Vagina (tissue), 2 donors: ENCODE measurements at regions of chr11 and their contacts with region 1.

Region 1: GRCh38 chr11:6443269-6444003 is 2.6 kb upstream of the HPX start:
- DNase-seq: no peak
- H3K4me3 ChIP-seq: no peak overlapping the region
- H3K27ac ChIP-seq: no peak overlapping the region
- H3K4me1 ChIP-seq: no peaks in the 10 kb centered on the region
- H3K27me3 ChIP-seq: no peaks in the 10 kb centered on the region
- CTCF ChIP-seq: peak; percentile 64 to 78 (median 71)
- POLR2A ChIP-seq: no peak

Region 2: GRCh38 chr11:6389921-6390724 is 53.3 kb before region 1 on chr11 and contains the start of gene SMPD1:
- intact Hi-C with region 1: loop called (anchors 10 kb)
- DNase-seq: peak; percentile 94 to 98
- H3K4me3 ChIP-seq: peak within 1 kb of the TSS; percentile 76 to 91
- H3K27ac ChIP-seq: peak within 1 kb of the TSS; percentile 90
- H3K4me1 ChIP-seq: peaks cover 31% of the 10 kb centered on the region
- H3K27me3 ChIP-seq: no peaks in the 10 kb centered on the region
- CTCF ChIP-seq: no peak
- POLR2A ChIP-seq: peak in 1 of 2 donors; percentile 67
- total RNA-seq, gene SMPD1: 23.1 TPM

Region 3: DNA sequence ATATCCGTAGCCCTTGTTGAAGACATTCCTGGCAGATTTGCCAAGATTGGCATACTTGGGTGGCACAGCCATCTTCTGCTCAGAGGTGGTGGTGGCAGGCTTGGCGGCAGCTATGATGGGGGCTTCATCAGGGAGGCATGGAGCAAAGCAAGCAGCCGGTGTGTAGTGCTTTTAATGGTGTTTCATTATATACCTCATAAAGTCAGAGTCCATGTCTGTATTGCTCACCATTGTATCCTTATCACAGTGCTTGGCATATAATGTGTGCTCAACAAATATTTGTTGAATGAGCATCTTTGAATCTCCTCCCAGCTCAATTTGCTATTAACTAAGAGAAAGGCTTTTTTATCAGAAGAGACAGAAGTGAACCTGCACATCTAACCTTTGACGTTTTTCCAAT is 45.9 kb after region 1 on chr11:
- intact Hi-C with region 1: no loop called
- DNase-seq: no peak
- H3K4me3 ChIP-seq: no peak overlapping the region
- H3K27ac ChIP-seq: no peak overlapping the region
- H3K4me1 ChIP-seq: no peaks in the 10 kb centered on the region
- H3K27me3 ChIP-seq: no peaks in the 10 kb centered on the region
- CTCF ChIP-seq: no peak
- POLR2A ChIP-seq: no peak

Region 4: GRCh38 chr11:6505577-6506240 is 62.3 kb after region 1 on chr11:
- intact Hi-C with region 1: loop called (anchors 10 kb)
- DNase-seq: no peak
- H3K4me3 ChIP-seq: no peak overlapping the region
- H3K27ac ChIP-seq: no peak overlapping the region
- H3K4me1 ChIP-seq: no peaks in the 10 kb centered on the region
- H3K27me3 ChIP-seq: no peaks in the 10 kb centered on the region
- CTCF ChIP-seq: peak; percentile 16 to 51 (median 44)
- POLR2A ChIP-seq: no peak